ENCODE measurements at regions of chr1 and their contacts with region 1.

Region 1: DNA sequence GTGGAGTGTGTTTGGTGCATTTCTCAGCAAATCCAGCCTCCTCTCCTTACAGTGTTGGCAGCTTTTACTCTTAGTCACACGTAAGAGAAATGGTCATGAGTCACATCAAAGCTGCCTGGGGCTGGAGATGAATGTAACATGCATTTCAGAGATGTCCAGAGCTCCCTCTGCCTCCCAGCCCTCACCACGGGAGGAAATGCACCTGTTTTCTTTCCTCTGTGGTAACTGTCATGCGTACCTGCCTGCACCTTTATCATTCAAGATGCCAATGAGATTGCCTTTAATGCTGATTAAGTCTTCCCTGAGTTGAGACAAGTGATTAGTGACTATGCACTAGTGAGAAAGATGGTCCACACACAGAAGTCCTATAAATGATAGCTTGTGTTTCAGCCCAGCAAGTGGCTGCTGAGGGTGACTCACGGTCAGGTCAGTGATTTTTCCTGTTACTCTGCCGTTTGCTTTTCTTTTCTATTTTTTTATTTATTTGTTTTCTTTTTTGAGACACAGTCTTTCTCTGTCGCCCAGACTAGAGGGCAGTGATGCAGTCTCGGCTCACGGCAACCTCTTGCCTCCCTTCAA is 277.3 kb upstream of the FMN2 start:
- DNase-seq: peak; percentile 14 to 35
- H3K4me3 ChIP-seq: no peak overlapping the region
- H3K4me3 Mint-ChIP-seq: no peak overlapping the region
- H3K27ac Mint-ChIP-seq: no peak overlapping the region
- H3K4me1 ChIP-seq: peaks cover 12% of the 10 kb centered on the region
- H3K4me1 Mint-ChIP-seq: peaks cover 16% of the 10 kb centered on the region
- H3K27me3 ChIP-seq: no peaks in the 10 kb centered on the region
- H3K27me3 Mint-ChIP-seq: no peaks in the 10 kb centered on the region
- CTCF ChIP-seq: no peak

Region 2: DNA sequence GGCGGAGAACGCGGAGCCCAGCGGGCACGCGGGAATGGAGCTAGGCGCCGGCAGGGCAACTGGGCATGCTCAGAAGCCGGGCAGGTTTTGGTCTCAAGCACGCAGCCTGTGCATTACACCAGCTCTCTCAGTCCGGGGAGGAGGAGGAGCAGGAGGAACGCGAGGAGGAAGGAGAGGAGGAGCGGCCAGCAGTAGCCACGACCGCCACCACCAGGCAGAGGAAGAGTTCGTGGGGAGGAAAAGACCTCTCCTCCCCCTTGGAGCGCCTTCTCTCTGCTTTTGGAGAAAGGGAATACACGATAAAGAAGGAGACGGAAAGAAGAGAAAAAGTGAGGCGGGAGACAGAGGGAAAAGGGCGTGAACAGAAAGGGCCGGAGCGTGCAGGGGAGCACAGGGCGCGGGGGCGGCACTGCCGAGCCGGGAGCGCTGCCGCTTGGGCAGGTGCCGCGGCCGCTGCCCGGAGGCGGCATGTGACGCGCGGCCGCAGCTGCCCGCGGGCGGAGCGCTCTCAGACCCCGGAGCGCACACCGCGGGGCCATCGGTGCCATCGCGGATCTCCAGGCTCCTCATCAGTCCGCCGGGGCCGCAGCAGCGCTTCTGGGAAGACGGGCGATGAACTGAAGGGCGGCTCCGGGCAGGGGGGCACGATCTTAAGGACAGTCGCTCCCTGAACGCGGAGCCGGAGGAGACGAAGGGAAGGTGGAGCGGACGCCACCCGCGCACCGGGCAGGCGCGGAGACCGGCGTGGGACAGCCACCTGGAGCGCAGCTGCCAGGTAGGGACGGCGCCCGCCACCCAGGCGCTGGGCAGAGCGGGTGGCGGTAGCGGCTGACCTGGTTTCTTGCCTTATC is 427.7 kb before region 1 on chr1 and contains the start of gene CHRM3:
- CTCF ChIA-PET with region 1: no interaction called
- POLR2A ChIA-PET with region 1: no interaction called
- intact Hi-C with region 1: loop called (anchors 10 kb)
- DNase-seq: peak; percentile 77 to 78
- H3K4me3 ChIP-seq: peak within 1 kb of the TSS; percentile 45
- H3K4me3 Mint-ChIP-seq: peak within 1 kb of the TSS; percentile 79
- H3K27ac Mint-ChIP-seq: peak within 1 kb of the TSS; percentile 46
- H3K4me1 ChIP-seq: peaks cover 7% of the 10 kb centered on the region; the same call in 1 of the 2 replicates
- H3K4me1 Mint-ChIP-seq: peaks cover 9% of the 10 kb centered on the region
- H3K27me3 ChIP-seq: no peaks in the 10 kb centered on the region
- H3K27me3 Mint-ChIP-seq: peaks cover 12% of the 10 kb centered on the region
- CTCF ChIP-seq: peak in 1 of 2 experiments; percentile 27
- total RNA-seq, gene CHRM3: 6.8 and 8.6 TPM in 2 replicates

Region 3: GRCh38 chr1:239868058-239868832 is 53.9 kb after region 1 on chr1:
- CTCF ChIA-PET with region 1: no interaction called
- POLR2A ChIA-PET with region 1: no interaction called
- intact Hi-C with region 1: loop called (anchors 2 kb)
- DNase-seq: no peak
- H3K4me3 ChIP-seq: no peak overlapping the region
- H3K4me3 Mint-ChIP-seq: no peak overlapping the region
- H3K27ac Mint-ChIP-seq: no peak overlapping the region
- H3K4me1 ChIP-seq: no peaks in the 10 kb centered on the region
- H3K4me1 Mint-ChIP-seq: no peaks in the 10 kb centered on the region
- H3K27me3 ChIP-seq: no peaks in the 10 kb centered on the region
- H3K27me3 Mint-ChIP-seq: no peaks in the 10 kb centered on the region
- CTCF ChIP-seq: no peak

Region 4: DNA sequence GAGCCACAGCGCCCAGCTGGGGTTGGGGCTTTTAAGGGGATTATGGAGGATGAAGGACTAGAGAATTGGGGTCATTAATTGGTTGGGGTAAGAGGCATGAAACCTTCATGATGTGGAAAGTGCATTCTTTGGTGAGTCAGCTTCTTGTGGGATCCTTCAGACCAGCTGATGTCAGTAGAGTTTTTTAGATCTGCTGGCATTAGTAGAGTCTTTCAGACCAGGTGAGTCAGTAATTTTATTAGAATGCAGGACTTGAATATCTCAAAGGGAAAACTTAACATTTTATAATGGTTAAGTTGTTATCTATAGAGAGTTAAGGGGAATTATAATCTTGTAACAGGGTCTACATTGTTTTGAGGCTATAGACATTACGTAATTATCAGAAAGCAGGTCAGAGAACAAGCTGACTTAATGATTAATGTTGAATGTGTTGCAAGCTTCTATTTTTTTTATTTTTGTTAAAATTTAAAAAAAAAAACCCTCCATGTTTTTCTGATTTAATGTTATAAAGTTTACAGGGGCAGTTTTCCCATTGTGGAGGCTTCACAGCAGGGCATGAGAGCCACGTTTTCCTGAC is 116.4 kb after region 1 on chr1:
- CTCF ChIA-PET with region 1: no interaction called
- POLR2A ChIA-PET with region 1: no interaction called
- intact Hi-C with region 1: no loop called
- DNase-seq: no peak
- H3K4me3 ChIP-seq: no peak overlapping the region
- H3K4me3 Mint-ChIP-seq: no peak overlapping the region
- H3K27ac Mint-ChIP-seq: no peak overlapping the region
- H3K4me1 ChIP-seq: no peaks in the 10 kb centered on the region
- H3K4me1 Mint-ChIP-seq: no peaks in the 10 kb centered on the region
- H3K27me3 ChIP-seq: no peaks in the 10 kb centered on the region
- H3K27me3 Mint-ChIP-seq: peaks cover 3% of the 10 kb centered on the region
- CTCF ChIP-seq: no peak

Measured in Caco-2 (cell line).